ENCODE measurements at regions of chr18 and their contacts with region 1.

Region 1: GRCh38 chr18:53567929-53568574 is 656.4 kb downstream of the MBD2 start:
- DNase-seq: no peak
- ATAC-seq: no peak
- H3K4me3 Mint-ChIP-seq: no peak overlapping the region
- H3K27ac Mint-ChIP-seq: no peak overlapping the region
- H3K4me1 Mint-ChIP-seq: no peaks in the 10 kb centered on the region
- H3K27me3 Mint-ChIP-seq: no peaks in the 10 kb centered on the region
- CTCF ChIP-seq: peak; percentile 40

Region 2: GRCh38 chr18:53241161-53241560 is 326.9 kb before region 1 on chr18:
- CTCF ChIA-PET with region 1: no interaction called
- POLR2A ChIA-PET with region 1: no interaction called
- intact Hi-C with region 1: no loop called
- DNase-seq: no peak
- ATAC-seq: no peak
- H3K4me3 Mint-ChIP-seq: no peak overlapping the region
- H3K27ac Mint-ChIP-seq: no peak overlapping the region
- H3K4me1 Mint-ChIP-seq: no peaks in the 10 kb centered on the region
- H3K27me3 Mint-ChIP-seq: no peaks in the 10 kb centered on the region
- CTCF ChIP-seq: no peak

Region 3: GRCh38 chr18:53610957-53611356 is 42.9 kb after region 1 on chr18:
- CTCF ChIA-PET with region 1: no interaction called
- POLR2A ChIA-PET with region 1: no interaction called
- intact Hi-C with region 1: no loop called
- DNase-seq: no peak
- ATAC-seq: no peak
- H3K4me3 Mint-ChIP-seq: no peak overlapping the region
- H3K27ac Mint-ChIP-seq: no peak overlapping the region
- H3K4me1 Mint-ChIP-seq: no peaks in the 10 kb centered on the region
- H3K27me3 Mint-ChIP-seq: no peaks in the 10 kb centered on the region
- CTCF ChIP-seq: no peak

Region 4: GRCh38 chr18:54127759-54128378 is 559.8 kb after region 1 on chr18:
- CTCF ChIA-PET with region 1: interaction called, 7 read pairs
- POLR2A ChIA-PET with region 1: no interaction called
- intact Hi-C with region 1: loop called (anchors 1 kb)
- DNase-seq: no peak
- ATAC-seq: no peak
- H3K4me3 Mint-ChIP-seq: no peak overlapping the region
- H3K27ac Mint-ChIP-seq: no peak overlapping the region
- H3K4me1 Mint-ChIP-seq: peaks cover 5% of the 10 kb centered on the region
- H3K27me3 Mint-ChIP-seq: no peaks in the 10 kb centered on the region
- CTCF ChIP-seq: no peak

Measured in activated B cell treated with CpG ODN at 0.5 μM for 24 hours (primary cell).